K562 (cell line): ENCODE measurements at regions of chr19 and their contacts with region 1.

Region 1: DNA sequence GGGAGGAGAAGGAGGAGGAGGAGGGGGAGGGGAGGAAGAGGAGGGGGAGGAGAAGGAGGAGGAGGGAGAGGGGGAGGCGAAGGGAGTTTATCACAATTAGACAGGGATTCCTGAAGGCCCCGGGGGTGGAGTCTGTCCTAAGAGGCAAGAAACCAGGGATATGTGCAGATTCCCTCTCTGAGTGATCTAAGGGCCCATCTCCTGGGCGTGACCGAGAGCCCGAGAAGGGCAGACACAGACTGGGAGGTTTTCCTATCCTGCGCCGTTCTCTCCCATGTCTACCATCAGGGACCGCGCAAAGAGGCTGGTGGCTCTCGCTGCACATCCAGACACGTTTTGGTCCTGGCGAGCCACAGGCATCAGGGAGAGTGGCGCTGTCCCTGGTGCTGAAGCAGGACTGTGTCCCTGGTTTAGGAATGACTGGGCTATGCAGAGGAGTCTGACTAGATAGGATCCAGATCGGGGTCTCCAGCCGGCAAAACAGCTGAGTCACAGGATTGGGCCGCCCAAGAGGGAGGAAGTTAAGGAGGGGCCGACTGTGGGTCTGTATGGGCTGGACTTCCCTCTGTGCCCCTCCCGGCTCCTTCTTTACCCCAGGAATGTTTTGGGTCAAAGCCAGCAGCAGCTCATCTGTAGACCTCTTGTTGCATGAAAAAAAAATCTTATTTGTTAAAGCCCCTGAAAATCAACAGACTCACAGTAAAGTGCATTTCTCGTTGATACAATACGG is 17.9 kb upstream of the ZNF175 start:
- DNase-seq: peak; percentile 85 to 96 (median 90)
- ATAC-seq: peak; percentile 55
- H3K4me3 ChIP-seq: peak overlapping the region; percentile 51
- H3K27ac ChIP-seq: no peak overlapping the region
- H3K4me1 ChIP-seq: peaks cover 23% of the 10 kb centered on the region in 2 experiments
- H3K27me3 ChIP-seq: no peaks in the 10 kb centered on the region
- CTCF ChIP-seq: no peak; a peak in 1 of 6 replicates
- EP300 ChIP-seq: peak; percentile 35
- POLR2A ChIP-seq: no peak
- RAD21 ChIP-seq: peak in 1 of 2 experiments; percentile 42; a peak in 2 of 4 replicates

Region 2: DNA sequence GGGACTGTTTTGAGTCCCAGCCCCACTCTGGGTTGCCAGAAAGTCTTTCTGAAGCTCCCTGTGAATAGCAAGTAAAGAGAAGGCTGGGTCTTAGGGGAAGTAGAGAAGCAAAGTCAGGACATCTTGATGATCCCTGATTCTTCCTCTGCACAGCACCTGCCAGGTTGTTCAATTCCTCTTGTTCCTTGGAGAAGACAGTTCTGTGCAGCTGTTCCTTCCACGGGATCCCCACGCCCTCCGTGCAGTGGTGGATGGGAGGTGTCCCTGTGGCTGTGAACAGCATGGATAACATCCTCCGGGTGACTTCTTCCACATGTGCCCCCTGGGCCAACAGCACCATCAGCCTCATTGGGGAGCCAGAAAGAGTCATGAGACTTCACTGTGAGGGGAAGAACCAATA is 270.8 kb before region 1 on chr19:
- CTCF ChIA-PET with region 1: no interaction called
- POLR2A ChIA-PET with region 1: no interaction called
- in situ Hi-C with region 1: no loop called
- intact Hi-C with region 1: no loop called
- DNase-seq: no peak
- ATAC-seq: no peak
- H3K4me3 ChIP-seq: no peak overlapping the region
- H3K27ac ChIP-seq: no peak overlapping the region
- H3K4me1 ChIP-seq: no peaks in the 10 kb centered on the region
- H3K27me3 ChIP-seq: peaks cover 5 to 24% of the 10 kb centered on the region in 2 experiments; a peak in 3 of 5 replicates
- CTCF ChIP-seq: no peak
- EP300 ChIP-seq: no peak
- POLR2A ChIP-seq: no peak
- RAD21 ChIP-seq: no peak

Region 3: DNA sequence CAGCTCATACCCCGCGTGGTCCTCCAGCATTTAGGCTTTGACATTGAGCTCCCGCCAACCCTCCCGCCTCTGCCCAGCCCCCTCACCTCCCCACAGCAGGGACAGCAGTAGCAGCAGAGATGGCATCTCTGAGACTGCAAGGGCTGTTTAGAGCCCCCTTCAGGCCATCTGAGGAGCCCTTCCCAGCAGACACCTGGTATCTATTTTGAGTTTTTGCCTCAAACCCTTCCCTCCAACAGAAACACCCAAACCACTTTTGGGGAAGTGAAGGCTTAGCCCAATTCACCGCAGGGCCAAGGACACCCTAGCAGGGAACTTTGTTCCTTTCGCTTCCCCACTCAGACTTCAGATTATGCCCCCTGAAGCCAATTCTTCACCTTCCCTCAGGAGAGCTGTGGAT is 11.6 kb after region 1 on chr19:
- CTCF ChIA-PET with region 1: no interaction called
- POLR2A ChIA-PET with region 1: interaction called, 16 read pairs
- in situ Hi-C with region 1: no loop called
- intact Hi-C with region 1: loop called (anchors 2 kb)
- DNase-seq: peak; percentile 27 to 57 (median 47)
- ATAC-seq: peak; percentile 83
- H3K4me3 ChIP-seq: no peak overlapping the region
- H3K27ac ChIP-seq: peak overlapping the region; percentile 19; the same call in 1 of the 3 replicates
- H3K4me1 ChIP-seq: peaks cover 14 to 51% of the 10 kb centered on the region in 2 experiments; a peak in 4 of 5 replicates
- H3K27me3 ChIP-seq: no peaks in the 10 kb centered on the region
- CTCF ChIP-seq: peak; percentile 61 to 63 (median 63)
- EP300 ChIP-seq: no peak; the same call in 1 of the 2 replicates
- POLR2A ChIP-seq: no peak
- RAD21 ChIP-seq: peak; percentile 7 to 49; a peak in 2 of 4 replicates

Region 4: GRCh38 chr19:51607920-51608562 is 54.9 kb after region 1 on chr19:
- CTCF ChIA-PET with region 1: no interaction called
- POLR2A ChIA-PET with region 1: interaction called, 3 read pairs
- in situ Hi-C with region 1: no loop called
- intact Hi-C with region 1: loop called (anchors 5 kb)
- DNase-seq: peak; percentile 82 to 93 (median 88)
- ATAC-seq: peak; percentile 97
- H3K4me3 ChIP-seq: no peak overlapping the region
- H3K27ac ChIP-seq: no peak overlapping the region
- H3K4me1 ChIP-seq: no peaks in the 10 kb centered on the region
- H3K27me3 ChIP-seq: peaks cover 0 to 13% of the 10 kb centered on the region in 2 experiments; a peak in 2 of 5 replicates
- CTCF ChIP-seq: peak; percentile 96 to 98 (median 96)
- EP300 ChIP-seq: peak; percentile 32; the same call in 1 of the 2 replicates
- POLR2A ChIP-seq: no peak
- RAD21 ChIP-seq: peak; percentile 74 to 87